Activated naive CD4-positive, alpha-beta T cell treated with anti-CD3 and anti-CD28 coated beads for 36 hours (primary cell): ENCODE measurements at regions of chr15 and their contacts with region 1.

Region 1: DNA sequence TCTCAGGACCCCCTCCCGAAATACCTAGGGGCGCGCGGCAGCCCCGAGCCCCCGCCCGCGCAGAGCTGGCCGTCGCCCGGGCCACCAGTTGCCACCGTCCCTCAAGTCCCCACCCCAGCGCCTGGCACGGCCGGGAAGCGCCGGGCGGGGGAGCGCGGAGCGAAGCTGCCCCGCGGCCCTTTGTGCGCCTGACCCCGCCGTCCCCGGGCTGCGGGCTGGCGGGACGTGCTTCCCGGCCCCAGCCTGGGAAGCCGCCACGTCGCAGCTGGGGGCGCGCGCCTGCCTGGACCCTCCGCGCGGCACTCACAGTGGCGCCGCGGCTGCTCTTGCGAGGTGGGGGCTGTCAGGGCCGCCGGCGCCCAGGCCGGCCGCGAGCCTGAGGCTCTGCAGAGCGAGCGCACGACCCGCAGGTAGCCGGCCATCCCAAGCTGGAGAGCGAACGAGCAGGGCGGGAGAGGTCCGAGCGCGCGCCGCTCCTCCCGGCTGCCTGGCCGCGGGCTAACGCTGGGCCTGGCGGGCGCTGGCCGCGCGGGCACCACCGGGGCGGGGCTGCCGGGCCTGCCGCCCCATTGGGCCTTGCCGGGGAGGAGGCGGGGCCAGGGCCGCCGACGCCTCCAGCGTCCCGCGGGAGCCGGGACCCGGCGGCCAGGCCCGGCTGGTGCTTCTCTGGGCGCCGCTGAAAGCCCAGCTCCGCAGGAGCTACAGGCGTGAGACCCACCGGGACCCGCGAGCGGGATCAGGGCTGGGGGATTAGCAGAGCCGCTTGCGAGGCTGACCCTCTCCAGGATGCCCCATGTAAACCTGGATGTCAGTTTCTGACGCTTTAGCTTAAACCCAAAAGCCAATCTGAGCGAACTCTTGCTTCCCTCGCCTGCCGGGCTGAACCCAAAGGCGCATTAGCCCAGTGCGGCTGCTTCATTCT is at the start of gene IDH2:
- DNase-seq: peak; percentile 64
- H3K4me3 Mint-ChIP-seq: peak within 1 kb of the TSS; percentile 91
- H3K27ac Mint-ChIP-seq: peak within 1 kb of the TSS; percentile 90
- H3K4me1 Mint-ChIP-seq: peaks cover 46% of the 10 kb centered on the region
- H3K27me3 Mint-ChIP-seq: no peaks in the 10 kb centered on the region
- total RNA-seq, gene IDH2: 225 to 229 TPM

Region 2: DNA sequence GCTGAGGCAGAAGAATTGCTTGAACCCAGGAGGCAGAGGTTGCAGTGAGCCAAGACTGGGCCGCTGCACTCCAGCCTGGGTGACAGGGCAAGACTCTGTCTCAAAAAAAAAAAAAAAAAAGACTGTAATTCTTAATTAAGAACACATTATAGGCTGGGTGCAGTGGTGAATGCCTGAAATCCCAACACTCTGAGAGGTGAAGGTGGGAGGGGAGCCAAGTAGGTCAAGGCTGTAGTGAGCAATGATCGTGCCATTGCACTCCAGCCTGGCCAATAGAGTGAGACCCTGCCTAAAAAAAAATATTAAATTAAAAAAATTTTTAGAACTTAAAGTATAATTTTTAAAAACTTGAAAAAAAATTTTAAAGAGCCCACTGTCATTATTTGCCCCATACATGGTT is 176.1 kb before region 1 on chr15:
- CTCF ChIA-PET with region 1: no interaction called
- intact Hi-C with region 1: no loop called
- DNase-seq: no peak
- H3K4me3 Mint-ChIP-seq: no peak overlapping the region
- H3K27ac Mint-ChIP-seq: no peak overlapping the region
- H3K4me1 Mint-ChIP-seq: no peaks in the 10 kb centered on the region
- H3K27me3 Mint-ChIP-seq: no peaks in the 10 kb centered on the region

Region 3: DNA sequence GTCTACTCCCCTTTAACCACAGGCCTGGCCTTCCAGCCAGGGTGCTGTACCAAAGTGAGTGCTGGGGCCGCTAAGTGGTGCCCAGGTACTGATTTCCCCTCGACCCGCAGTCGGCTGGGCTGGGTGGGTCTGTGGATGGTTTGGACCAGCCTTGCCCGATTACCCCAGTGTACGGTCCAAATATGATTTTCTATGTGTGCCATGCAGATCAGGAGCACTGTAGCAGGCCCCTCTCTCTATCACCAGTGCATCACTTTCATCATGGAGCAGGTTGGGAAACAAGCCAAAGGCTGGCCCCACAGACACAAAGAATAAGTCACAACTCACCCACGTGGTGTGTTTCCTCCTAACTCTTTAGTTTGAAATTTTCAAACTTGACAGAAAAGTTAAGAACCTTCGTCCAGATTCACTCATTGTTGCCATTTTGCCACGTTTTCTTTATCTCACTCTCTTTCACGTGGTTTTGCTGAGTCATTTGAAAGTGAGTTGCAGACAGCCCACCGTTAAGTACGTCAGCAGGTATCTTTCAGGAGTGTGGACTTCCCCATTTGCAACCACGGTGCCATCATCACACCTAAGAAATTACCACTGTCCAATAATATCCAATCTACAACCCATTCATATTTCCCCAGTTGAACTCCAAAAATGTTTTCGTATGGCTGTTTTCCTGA is 64.1 kb before region 1 on chr15:
- CTCF ChIA-PET with region 1: no interaction called
- intact Hi-C with region 1: loop called (anchors 1 kb)
- DNase-seq: peak; percentile 86
- H3K4me3 Mint-ChIP-seq: no peak overlapping the region
- H3K27ac Mint-ChIP-seq: peak overlapping the region; percentile 92
- H3K4me1 Mint-ChIP-seq: peaks cover 69% of the 10 kb centered on the region
- H3K27me3 Mint-ChIP-seq: no peaks in the 10 kb centered on the region